Sciatic nerve (tissue), 2 donors: ENCODE measurements at regions of chr20 and their contacts with region 1.

Region 1: GRCh38 chr20:18662279-18663040 is 74.6 kb downstream of the DTD1 start:
- DNase-seq: no peak
- ATAC-seq: no peak

Region 2: DNA sequence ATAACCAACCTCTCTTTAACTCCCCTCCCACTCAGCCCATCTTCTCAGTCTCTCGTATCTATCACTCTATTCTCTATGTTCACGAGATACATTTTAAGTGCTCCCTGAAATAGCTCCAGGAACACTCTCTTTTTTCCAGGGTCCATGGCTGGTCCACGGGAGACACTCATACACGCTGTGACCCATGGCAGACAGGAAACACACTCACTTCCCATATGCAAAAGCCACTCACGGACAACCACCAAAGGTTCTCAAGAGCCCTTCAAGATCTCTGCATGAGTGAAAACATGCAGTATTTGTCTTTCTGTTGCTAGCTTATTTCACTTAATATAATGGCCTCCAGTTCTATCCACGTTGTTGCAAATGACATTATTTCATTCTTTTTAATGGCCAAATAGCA is 1507.1 kb before region 1 on chr20:
- intact Hi-C with region 1: loop called (anchors 10 kb)
- DNase-seq: no peak
- ATAC-seq: no peak

Region 3: GRCh38 chr20:18589941-18590674 is 72.4 kb before region 1 on chr20:
- intact Hi-C with region 1: no loop called
- DNase-seq: no peak
- ATAC-seq: no peak